PC-3 (cell line): ENCODE measurements at regions of chr9 and their contacts with region 1.

Region 1: GRCh38 chr9:19161257-19162025 is 34.1 kb upstream of the PLIN2 start:
- DNase-seq: peak; percentile 95
- ATAC-seq: peak; percentile 95
- H3K4me3 ChIP-seq: no peak overlapping the region
- H3K27ac ChIP-seq: peak overlapping the region; percentile 83
- H3K4me1 ChIP-seq: peaks cover 16% of the 10 kb centered on the region
- H3K27me3 ChIP-seq: no peaks in the 10 kb centered on the region
- CTCF ChIP-seq: no peak

Region 2: DNA sequence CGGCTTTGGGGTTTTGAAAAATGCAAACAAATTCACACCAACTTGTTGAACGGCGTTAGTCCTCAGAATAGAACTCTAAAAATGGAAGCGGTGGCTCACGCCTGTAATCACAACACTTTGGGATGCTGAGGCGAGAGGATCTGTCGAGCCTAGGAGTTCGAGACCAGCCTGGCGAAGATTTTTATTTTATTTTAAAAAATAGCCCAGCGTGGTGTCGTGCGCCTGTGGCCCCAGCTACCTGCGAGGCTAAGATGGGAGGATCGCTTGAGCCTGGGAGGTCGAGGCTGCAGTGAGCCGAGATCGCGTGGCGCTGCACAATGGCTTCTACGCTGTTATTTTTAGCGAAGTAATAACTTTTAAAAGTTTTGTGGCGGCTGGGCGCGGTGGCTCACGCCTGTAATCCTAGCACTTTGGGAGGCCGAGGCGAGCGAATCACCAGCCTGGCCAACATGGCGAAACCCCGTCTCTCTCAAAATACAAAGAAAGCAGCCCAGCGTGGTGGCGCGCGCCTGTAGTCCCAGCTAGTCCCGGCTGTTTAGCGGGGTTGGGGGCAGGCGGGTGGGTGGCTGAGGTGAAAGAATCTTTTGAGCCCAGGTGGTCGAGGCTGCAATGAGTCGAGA is 33.5 kb before region 1 on chr9:
- CTCF ChIA-PET with region 1: no interaction called
- POLR2A ChIA-PET with region 1: no interaction called
- intact Hi-C with region 1: loop called (anchors 5 kb)
- DNase-seq: no peak
- ATAC-seq: no peak
- H3K4me3 ChIP-seq: peak overlapping the region; percentile 89
- H3K27ac ChIP-seq: no peak overlapping the region
- H3K4me1 ChIP-seq: peaks cover 24% of the 10 kb centered on the region
- H3K27me3 ChIP-seq: no peaks in the 10 kb centered on the region
- CTCF ChIP-seq: no peak